Transverse colon (tissue), 4 donors: ENCODE measurements at regions of chr19 and their contacts with region 1.

Region 1: DNA sequence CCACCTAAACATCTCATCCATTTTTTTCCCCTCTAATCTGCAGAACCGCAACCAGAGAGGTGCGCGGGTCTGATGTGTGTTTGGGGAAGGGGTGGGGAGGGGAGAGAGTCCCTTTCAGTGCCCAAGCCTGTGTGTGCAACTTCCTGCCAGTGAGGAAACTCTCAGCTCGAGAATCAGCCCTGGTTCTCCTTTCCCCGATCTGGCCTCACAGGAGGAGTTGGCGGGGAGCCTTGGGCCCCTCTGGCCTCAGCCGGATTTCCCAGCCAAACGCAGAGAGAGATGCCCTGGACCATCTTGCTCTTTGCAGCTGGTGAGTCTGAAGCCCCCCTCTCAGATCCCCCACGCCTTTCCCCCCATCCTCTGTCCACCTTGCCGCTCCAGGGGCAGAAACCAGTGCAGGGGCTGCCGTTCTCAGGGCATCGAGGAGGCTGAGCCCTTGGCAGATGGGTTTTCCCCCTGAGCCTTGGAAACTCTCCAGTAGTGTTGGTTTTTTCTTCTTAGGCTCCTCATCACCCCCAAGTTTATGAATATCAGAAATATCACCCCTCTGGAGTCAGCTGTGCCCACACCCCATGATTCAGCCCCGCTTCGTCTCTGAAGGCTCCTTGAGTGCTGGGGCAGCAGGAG is at the start of gene C19orf38:
- DNase-seq: no peak
- H3K4me3 ChIP-seq: no peak within 1 kb of the TSS
- H3K27ac ChIP-seq: no peak within 1 kb of the TSS
- H3K4me1 ChIP-seq: no peaks in the 10 kb centered on the region
- H3K27me3 ChIP-seq: peaks cover 12% of the 10 kb centered on the region
- CTCF ChIP-seq: no peak
- EP300 ChIP-seq: no peak
- POLR2A ChIP-seq: no peak
- total RNA-seq, gene C19orf38: 0.79 to 1.8 (median 0.96) TPM in 3 of 4 donors, not detected in the other

Region 2: DNA sequence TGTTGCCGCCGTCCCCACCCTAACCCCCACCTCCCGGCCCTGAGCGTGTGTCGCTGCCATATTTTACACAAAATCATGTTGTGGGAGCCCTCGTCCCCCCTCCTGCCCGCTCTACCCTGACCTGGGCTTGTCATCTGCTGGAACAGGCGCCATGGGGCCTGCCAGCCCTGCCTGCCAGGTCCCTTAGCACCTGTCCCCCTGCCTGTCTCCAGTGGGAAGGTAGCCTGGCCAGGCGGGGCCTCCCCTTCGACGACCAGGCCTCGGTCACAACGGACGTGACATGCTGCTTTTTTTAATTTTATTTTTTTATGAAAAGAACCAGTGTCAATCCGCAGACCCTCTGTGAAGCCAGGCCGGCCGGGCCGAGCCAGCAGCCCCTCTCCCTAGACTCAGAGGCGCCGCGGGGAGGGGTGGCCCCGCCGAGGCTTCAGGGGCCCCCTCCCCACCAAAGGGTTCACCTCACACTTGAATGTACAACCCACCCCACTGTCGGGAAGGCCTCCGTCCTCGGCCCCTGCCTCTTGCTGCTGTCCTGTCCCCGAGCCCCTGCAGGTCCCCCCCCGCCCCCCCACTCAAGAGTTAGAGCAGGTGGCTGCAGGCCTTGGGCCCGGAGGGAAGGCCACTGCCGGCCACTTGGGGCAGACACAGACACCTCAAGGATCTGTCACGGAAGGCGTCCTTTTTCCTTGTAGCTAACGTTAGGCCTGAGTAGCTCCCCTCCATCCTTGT is 73.7 kb after region 1 on chr19:
- in situ Hi-C with region 1: no loop called
- intact Hi-C with region 1: loop called (anchors 2 kb)
- DNase-seq: no peak
- H3K4me3 ChIP-seq: no peak overlapping the region
- H3K27ac ChIP-seq: no peak overlapping the region
- H3K4me1 ChIP-seq: peaks cover 0 to 4% (median under 1%) of the 10 kb centered on the region in 4 donors
- H3K27me3 ChIP-seq: no peaks in the 10 kb centered on the region
- CTCF ChIP-seq: no peak
- EP300 ChIP-seq: no peak
- POLR2A ChIP-seq: no peak

Region 3: DNA sequence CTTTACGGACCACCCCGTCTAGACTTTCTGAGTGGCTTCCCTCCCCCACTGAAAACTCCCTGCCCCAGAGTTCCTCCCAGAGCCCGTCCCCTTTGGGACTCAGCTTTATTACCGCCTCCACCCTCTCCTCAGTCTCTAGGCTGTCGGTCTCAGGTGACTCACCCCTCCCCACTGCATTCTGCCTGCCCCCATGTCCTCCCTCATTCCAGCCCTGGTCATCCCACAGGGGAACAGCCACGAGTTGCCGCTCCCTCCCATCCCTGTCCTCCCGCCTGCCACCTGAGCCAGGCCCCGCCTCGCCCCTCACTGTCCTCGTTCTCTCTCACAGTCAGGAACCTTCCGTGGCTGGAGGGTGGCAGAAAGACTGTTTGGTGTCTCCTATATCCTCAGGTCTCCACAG is 169.8 kb after region 1 on chr19:
- in situ Hi-C with region 1: no loop called
- intact Hi-C with region 1: no loop called
- DNase-seq: peak; percentile 67
- H3K4me3 ChIP-seq: no peak overlapping the region
- H3K27ac ChIP-seq: peak overlapping the region in 3 of 4 donors; percentile 27 to 39 (median 31)
- H3K4me1 ChIP-seq: peaks cover 0 to 12% (median 8%) of the 10 kb centered on the region in 4 donors
- H3K27me3 ChIP-seq: no peaks in the 10 kb centered on the region
- CTCF ChIP-seq: no peak
- EP300 ChIP-seq: no peak
- POLR2A ChIP-seq: no peak